ENCODE measurements at regions of chr2 and their contacts with region 1.

Region 1: GRCh38 chr2:88671786-88672427 is 19.6 kb upstream of the RPIA start:
- DNase-seq: no peak
- H3K4me3 ChIP-seq: no peak overlapping the region
- H3K27ac ChIP-seq: no peak overlapping the region
- H3K4me1 ChIP-seq: no peaks in the 10 kb centered on the region
- H3K27me3 ChIP-seq: no peaks in the 10 kb centered on the region
- CTCF ChIP-seq: peak; percentile 69 to 88 (median 74)
- POLR2A ChIP-seq: no peak

Region 2: DNA sequence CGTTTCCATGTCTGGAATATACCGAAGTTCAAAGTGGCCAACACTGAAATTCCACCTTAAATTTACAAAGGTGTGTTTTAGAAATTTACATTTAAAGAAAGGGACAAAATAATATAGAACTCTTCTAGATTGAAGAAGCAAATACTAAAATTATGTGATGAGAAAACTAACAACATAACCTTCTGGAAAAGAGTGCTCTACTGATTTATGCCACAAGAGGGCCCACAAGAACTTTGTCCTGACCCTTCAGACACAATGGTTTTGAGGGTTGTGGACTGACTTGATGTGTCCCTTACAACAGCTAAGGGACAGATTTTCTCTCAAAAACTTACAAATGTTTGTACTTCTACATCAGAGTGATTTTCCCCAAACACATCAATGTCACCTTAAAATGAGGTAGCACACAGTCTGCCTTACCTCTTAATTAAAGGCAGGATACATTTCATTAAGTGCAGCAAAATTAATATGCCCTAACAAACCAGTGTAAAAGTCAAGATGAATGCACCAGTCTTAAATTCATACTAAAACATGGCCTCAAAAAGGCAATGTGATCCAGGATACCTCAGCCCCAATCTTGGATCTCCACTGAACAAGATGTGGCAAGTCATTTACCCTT is 80.8 kb before region 1 on chr2:
- intact Hi-C with region 1: loop called (anchors 2 kb)
- DNase-seq: peak; percentile 27 to 38
- H3K4me3 ChIP-seq: no peak overlapping the region
- H3K27ac ChIP-seq: peak overlapping the region; percentile 59 to 74 (median 69)
- H3K4me1 ChIP-seq: peaks cover 0 to 14% of the 10 kb centered on the region in 2 donors
- H3K27me3 ChIP-seq: no peaks in the 10 kb centered on the region
- CTCF ChIP-seq: peak; percentile 59 to 86 (median 74)
- POLR2A ChIP-seq: no peak